IMR-90 (cell line): ENCODE measurements at regions of chr4 and their contacts with region 1.

Region 1: DNA sequence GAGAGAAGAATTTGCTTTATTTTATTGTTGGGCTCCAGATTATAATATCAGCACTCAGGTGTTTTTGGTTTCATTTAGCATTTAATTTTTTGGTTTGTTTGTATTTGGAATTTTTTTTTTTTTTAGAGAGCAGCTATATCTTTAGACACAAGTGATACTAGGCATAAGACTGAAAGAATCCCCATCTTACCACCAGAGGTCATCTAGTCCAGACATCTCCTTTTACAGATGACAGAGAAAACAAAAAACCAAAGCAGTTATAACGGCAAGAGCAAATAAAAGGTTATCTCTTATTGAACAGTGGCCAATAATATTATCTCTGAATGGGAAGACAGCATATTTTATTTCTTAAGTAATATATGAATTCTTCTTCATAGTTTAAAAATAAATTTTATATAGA is 22.8 kb downstream of the USP38 start:
- DNase-seq: peak; percentile 50
- ATAC-seq: peak; percentile 59
- H3K4me3 ChIP-seq: no peak overlapping the region
- H3K27ac ChIP-seq: no peak overlapping the region
- H3K4me1 ChIP-seq: no peaks in the 10 kb centered on the region
- H3K27me3 ChIP-seq: no peaks in the 10 kb centered on the region
- CTCF ChIP-seq: peak; percentile 36; the same call in 1 of the 2 replicates
- POLR2A ChIP-seq: no peak
- RAD21 ChIP-seq: peak; percentile 31; the same call in 1 of the 2 replicates

Region 2: GRCh38 chr4:143335979-143336780 is 128.6 kb after region 1 on chr4:
- CTCF ChIA-PET with region 1: no interaction called
- POLR2A ChIA-PET with region 1: interaction called, 5 read pairs
- dilution Hi-C with region 1: no loop called
- in situ Hi-C with region 1: loop called (anchors 25 kb)
- intact Hi-C with region 1: loop called (anchors 1 kb)
- DNase-seq: peak; percentile 90
- ATAC-seq: peak; percentile 86
- H3K4me3 ChIP-seq: peak overlapping the region; percentile 94
- H3K27ac ChIP-seq: peak overlapping the region; percentile 93
- H3K4me1 ChIP-seq: peaks cover under 1% of the 10 kb centered on the region; the same call in 1 of the 2 replicates
- H3K27me3 ChIP-seq: no peaks in the 10 kb centered on the region
- CTCF ChIP-seq: no peak
- POLR2A ChIP-seq: peak; percentile 54
- RAD21 ChIP-seq: no peak

Region 3: GRCh38 chr4:143399113-143399949 is 191.8 kb after region 1 on chr4:
- CTCF ChIA-PET with region 1: no interaction called
- POLR2A ChIA-PET with region 1: no interaction called
- dilution Hi-C with region 1: no loop called
- in situ Hi-C with region 1: no loop called
- intact Hi-C with region 1: loop called (anchors 2 kb)
- DNase-seq: peak; percentile 21
- ATAC-seq: no peak
- H3K4me3 ChIP-seq: no peak overlapping the region
- H3K27ac ChIP-seq: no peak overlapping the region
- H3K4me1 ChIP-seq: peaks cover 7% of the 10 kb centered on the region
- H3K27me3 ChIP-seq: no peaks in the 10 kb centered on the region
- CTCF ChIP-seq: peak; percentile 48
- POLR2A ChIP-seq: no peak
- RAD21 ChIP-seq: peak; percentile 25; the same call in 1 of the 2 replicates

Region 4: DNA sequence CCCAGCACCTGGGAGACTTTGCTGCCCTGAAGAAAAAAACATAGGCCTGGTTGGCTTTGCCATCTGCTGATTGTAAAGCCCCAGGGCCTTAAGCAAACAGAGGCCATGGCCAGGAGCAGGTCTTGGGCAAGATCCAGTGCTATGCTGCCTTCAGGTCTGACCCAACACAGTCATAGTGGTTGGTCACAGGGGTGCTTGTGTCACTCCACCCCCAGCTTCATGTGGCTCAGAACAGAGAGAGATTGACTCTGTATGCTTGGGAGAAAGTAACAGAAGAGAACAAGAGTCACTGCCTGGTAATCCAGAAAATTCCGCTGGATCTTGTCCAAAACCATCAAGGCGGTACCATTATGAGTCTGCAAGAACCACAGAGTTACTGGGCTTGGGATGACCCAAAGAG is 281.5 kb after region 1 on chr4:
- CTCF ChIA-PET with region 1: interaction called, 5 read pairs
- POLR2A ChIA-PET with region 1: no interaction called
- dilution Hi-C with region 1: no loop called
- in situ Hi-C with region 1: loop called (anchors 5 kb)
- intact Hi-C with region 1: no loop called
- DNase-seq: peak; percentile 28
- ATAC-seq: no peak
- H3K4me3 ChIP-seq: no peak overlapping the region
- H3K27ac ChIP-seq: no peak overlapping the region
- H3K4me1 ChIP-seq: no peaks in the 10 kb centered on the region
- H3K27me3 ChIP-seq: no peaks in the 10 kb centered on the region
- CTCF ChIP-seq: no peak
- POLR2A ChIP-seq: no peak
- RAD21 ChIP-seq: no peak